GM13976 (cell line): ENCODE measurements at regions of chr18 and their contacts with region 1.

Region 1: DNA sequence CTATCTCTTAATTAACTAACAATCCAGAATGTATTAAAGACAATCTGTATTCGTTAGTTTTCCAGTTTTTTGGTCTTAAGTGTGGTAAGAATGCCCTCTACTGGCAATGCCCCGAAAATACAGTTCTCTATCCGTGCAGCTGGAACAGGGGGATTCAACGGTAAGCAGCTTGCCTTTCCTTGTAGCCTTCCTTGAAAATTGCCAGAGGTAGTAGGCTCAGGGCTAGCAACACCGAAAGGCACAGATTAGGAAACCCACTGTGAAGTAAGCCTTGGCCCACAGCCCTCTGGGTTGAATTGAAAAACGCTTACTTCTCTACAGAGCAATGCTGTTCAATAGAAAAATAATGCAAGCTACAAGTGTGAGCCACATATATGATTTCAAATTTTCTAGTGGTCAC is 17.1 kb upstream of the VPS4B start:
- DNase-seq: peak; percentile 57
- CTCF ChIP-seq: peak; percentile 58

Region 2: GRCh38 chr18:62881509-62882016 is 557.8 kb before region 1 on chr18:
- in situ Hi-C with region 1: no loop called
- DNase-seq: peak; percentile 37
- CTCF ChIP-seq: no peak

Region 3: DNA sequence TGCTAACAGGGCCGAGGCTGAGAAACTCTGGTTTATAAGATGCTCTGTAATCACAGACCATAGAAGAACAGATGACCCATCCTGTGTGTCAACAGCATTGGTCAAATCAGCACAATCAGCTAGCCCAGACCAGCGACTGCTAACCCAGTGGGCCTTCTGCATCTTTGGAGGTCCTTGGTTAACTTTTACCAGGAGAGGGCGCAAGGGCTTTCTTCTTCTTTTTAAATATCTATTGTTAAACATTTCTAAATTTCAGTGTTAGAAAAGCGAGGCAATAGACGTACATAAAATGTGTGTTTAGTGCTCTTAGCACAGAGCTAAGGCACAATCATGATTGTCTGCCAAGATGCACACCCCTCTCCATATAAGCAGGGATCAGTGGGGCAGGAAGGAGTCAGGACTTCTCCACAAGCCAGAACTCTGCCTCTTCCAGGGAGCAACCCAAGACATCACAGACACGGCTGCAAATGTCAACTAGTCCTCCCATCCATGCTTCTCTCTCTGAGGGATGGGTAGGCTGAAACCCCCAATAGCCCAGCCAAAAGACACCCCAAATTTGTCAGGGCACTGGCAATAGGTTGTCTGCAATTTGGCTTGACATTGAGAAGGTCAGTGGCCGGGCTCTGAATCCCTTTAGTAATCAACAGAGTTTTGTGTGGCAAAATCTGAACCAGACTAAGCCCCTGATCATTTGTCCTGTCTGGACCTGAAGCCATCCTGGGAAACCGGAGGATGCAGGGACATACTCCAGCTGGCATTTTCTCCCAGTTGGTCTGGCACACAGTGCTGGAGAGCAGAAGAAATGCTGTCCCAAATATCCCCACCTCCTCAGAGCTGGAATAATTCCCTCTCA is 308.0 kb before region 1 on chr18:
- in situ Hi-C with region 1: loop called (anchors 25 kb)
- DNase-seq: peak; percentile 57
- CTCF ChIP-seq: peak; percentile 32

Region 4: DNA sequence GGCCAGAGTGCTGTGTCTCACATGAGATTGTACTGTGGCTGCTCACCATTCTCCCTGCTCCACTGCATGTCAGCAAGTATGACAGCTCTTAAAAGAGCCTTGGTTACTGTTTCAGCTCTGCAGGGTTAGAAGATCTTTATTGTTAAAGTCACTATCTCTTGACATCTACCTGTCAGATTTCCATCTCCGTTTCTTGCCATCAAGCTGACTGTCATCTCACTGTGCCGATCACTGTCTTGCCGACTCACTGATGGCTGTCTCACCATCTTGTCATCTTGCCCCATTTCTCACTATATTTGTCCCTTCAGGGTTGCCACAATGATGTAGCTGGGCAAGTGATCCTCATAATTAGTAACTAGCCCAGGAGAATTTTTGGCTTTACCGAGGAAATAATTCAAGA is 1510.6 kb after region 1 on chr18:
- in situ Hi-C with region 1: no loop called
- DNase-seq: no peak
- CTCF ChIP-seq: no peak